ENCODE measurements at regions of chr11 and their contacts with region 1.

Region 1: DNA sequence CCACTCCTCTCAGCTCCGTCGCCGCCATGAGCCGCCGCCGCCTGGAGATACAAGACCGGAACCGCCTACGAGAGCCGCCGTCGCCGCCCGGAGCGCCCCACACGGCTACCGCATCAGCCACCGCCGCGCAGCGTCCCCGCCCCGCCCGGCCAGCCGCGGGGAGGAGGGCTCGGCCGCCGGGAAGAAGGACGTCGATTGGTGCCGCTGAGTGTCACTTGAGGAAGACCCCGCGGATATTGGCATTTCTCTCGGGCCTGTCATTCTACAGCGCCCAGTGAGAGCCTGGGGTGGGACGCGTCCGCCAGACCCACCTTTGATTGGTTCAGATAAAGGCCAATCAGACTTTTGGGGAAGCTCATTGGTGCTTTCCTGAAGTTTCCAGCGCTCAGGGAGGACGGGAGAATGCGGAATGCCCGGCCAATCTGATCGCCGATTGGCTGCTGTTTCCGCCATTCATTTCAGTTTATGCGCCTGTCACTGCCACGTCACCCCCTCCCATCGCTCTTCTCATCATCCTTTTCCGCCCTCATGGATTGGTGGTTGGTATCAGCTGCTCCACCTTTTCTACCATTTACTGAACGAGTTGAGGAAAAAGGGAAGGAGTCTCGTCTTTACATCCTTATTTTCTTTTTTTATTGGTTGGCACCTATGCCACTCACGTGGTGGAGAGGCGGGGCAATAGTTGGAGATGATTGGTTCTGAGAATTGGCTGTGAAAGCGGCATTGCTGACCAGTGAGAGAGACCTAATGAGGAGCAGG is at the start of gene OSBP:
- DNase-seq: peak; percentile 97 to 100 (median 100)
- ATAC-seq: peak; percentile 93 to 96 (median 94)
- H3K4me3 ChIP-seq: peak within 1 kb of the TSS; percentile 82 to 92 (median 86)
- H3K27ac ChIP-seq: peak within 1 kb of the TSS; percentile 87 to 95 (median 92)
- H3K4me1 ChIP-seq: peaks cover 0 to 46% (median 39%) of the 10 kb centered on the region in 12 donors
- H3K27me3 ChIP-seq: no peaks in the 10 kb centered on the region
- CTCF ChIP-seq: peak in 3 of 12 donors; percentile 2 to 20 (median 5)
- POLR2A ChIP-seq: peak in 1 of 2 donors; percentile 80
- total RNA-seq, gene OSBP: 23.4 to 48.3 (median 33.1) TPM

Region 2: DNA sequence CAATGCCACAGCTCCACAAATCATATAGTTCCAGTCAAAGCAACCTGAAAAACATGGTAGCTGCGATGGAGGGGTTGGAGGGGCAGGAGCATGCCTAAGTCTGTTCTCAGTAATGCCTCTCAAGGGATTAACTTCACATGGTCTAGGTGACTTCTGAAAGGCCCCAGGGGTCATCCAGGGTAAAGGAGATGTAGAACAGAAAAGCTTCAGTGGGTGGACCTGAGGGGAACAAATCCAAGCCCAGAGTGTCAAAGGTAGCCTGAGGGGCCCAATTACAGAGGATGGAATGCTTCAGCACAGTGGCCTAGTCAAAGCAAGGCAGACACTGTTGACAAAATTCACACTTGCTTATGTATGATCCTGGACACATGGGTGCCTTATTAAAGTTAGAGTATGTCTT is 81.1 kb before region 1 on chr11:
- intact Hi-C with region 1: loop called in 1 of 10 experiments (anchors 5 kb)
- DNase-seq: no peak
- ATAC-seq: no peak
- H3K4me3 ChIP-seq: no peak overlapping the region
- H3K27ac ChIP-seq: no peak overlapping the region
- H3K4me1 ChIP-seq: peaks cover 0 to 10% (median 0%) of the 10 kb centered on the region in 12 donors
- H3K27me3 ChIP-seq: no peaks in the 10 kb centered on the region
- CTCF ChIP-seq: no peak
- POLR2A ChIP-seq: no peak

Region 3: GRCh38 chr11:59545179-59546020 is 70.4 kb before region 1 on chr11:
- intact Hi-C with region 1: loop called in 5 of 10 experiments (anchors 5 to 10 kb)
- DNase-seq: no peak
- ATAC-seq: no peak
- H3K4me3 ChIP-seq: no peak overlapping the region
- H3K27ac ChIP-seq: no peak overlapping the region
- H3K4me1 ChIP-seq: peaks cover 0 to 25% (median 0%) of the 10 kb centered on the region in 12 donors
- H3K27me3 ChIP-seq: no peaks in the 10 kb centered on the region
- CTCF ChIP-seq: no peak
- POLR2A ChIP-seq: no peak

Region 4: DNA sequence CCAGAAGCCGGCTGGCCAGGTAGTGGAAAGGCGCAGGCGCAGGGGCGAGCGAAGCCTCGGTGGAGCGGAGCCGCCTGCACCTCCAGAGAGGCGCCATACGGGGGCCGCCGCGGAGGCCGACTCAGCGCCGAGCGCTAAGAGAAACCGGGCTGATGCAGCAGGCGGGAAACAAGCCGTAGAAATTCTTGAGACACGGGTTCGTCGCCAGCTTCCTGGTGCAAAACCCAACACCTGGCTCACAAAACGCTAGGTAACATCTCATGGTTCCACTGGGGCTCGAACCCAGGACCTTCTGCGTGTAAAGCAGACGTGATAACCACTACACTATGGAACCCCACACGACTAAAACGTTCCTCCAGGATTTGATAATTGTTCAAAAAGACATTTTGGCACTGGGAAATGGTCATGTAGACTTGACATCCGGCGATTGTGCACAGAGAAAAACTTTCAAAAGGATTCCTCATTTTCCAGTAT is 65.4 kb before region 1 on chr11:
- intact Hi-C with region 1: loop called in 5 of 10 experiments (anchors 5 to 10 kb)
- DNase-seq: peak; percentile 62 to 83 (median 78)
- ATAC-seq: peak; percentile 74 to 91 (median 86)
- H3K4me3 ChIP-seq: peak overlapping the region; percentile 24 to 68 (median 56)
- H3K27ac ChIP-seq: peak overlapping the region; percentile 43 to 89 (median 80)
- H3K4me1 ChIP-seq: peaks cover 0 to 44% (median 0%) of the 10 kb centered on the region in 12 donors
- H3K27me3 ChIP-seq: peaks cover 0 to 2% (median 0%) of the 10 kb centered on the region in 9 donors
- CTCF ChIP-seq: peak; percentile 19 to 62 (median 40)
- POLR2A ChIP-seq: no peak

Region 5: GRCh38 chr11:59560702-59561469 is 54.9 kb before region 1 on chr11:
- intact Hi-C with region 1: loop called in 4 of 10 experiments (anchors 2 to 10 kb)
- DNase-seq: peak; percentile 88 to 91 (median 90)
- ATAC-seq: peak; percentile 83 to 92 (median 88)
- H3K4me3 ChIP-seq: peak overlapping the region; percentile 70 to 96 (median 84)
- H3K27ac ChIP-seq: peak overlapping the region; percentile 59 to 92 (median 82)
- H3K4me1 ChIP-seq: peaks cover 0 to 37% (median 7%) of the 10 kb centered on the region in 12 donors
- H3K27me3 ChIP-seq: no peaks in the 10 kb centered on the region
- CTCF ChIP-seq: no peak
- POLR2A ChIP-seq: peak in 1 of 2 donors; percentile 24

Region 6: DNA sequence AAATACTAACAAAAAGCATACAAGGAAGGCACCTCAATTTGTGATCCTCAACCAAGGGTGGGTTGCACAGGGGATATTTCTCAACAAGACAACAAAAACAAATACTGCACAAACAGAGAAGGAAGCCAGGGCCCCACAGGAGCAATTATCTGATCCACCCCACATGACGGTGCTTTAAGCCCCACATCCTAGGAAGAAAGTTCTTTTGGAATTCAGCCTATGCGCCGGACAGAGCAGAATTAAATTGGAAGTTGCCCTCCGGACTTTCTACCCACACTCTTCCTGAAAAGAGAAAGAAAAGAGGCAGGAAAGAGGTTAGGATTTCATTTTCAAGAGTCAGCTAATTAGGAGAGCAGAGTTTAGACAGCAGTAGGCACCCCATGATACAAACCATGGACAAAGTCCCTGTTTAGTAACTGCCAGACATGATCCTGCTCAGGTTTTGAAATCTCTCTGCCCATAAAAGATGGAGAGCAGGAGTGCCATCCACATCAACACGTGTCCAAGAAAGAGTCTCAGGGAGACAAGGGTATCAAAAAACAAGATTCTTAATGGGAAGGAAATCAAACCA is 40.8 kb before region 1 on chr11:
- intact Hi-C with region 1: loop called in 1 of 10 experiments (anchors 5 kb)
- DNase-seq: no peak
- ATAC-seq: no peak
- H3K4me3 ChIP-seq: no peak overlapping the region
- H3K27ac ChIP-seq: peak overlapping the region in 8 of 12 donors; percentile 11 to 75 (median 48)
- H3K4me1 ChIP-seq: peaks cover 0 to 21% (median 1%) of the 10 kb centered on the region in 12 donors
- H3K27me3 ChIP-seq: no peaks in the 10 kb centered on the region
- CTCF ChIP-seq: no peak
- POLR2A ChIP-seq: no peak

Region 7: DNA sequence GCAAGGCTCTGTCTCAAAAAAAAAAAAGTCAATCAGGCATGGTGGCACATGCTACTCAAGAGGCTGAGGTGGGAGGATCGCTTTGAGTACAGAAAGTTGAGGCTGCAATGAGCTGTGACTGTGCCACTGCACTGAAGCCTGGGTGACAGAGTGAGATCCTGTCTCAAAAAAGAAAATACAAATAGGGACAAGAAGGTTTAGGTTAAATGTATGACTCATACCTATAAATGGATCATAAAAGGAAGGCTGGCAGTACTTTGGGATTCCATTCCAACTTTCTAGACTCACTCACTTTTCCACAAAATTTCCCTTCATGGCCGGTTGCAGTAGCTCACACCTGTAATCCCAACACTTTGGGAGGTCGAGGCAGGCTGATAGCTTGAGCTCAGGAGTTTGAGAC is 25.3 kb after region 1 on chr11:
- intact Hi-C with region 1: no loop called
- DNase-seq: no peak
- ATAC-seq: no peak
- H3K4me3 ChIP-seq: no peak overlapping the region
- H3K27ac ChIP-seq: no peak overlapping the region
- H3K4me1 ChIP-seq: no peaks in the 10 kb centered on the region
- H3K27me3 ChIP-seq: no peaks in the 10 kb centered on the region
- CTCF ChIP-seq: no peak
- POLR2A ChIP-seq: no peak

Region 8: GRCh38 chr11:59957094-59957493 is 341.3 kb after region 1 on chr11:
- intact Hi-C with region 1: no loop called
- DNase-seq: no peak
- ATAC-seq: no peak
- H3K4me3 ChIP-seq: no peak overlapping the region
- H3K27ac ChIP-seq: no peak overlapping the region
- H3K4me1 ChIP-seq: peaks cover 0 to 2% (median 0%) of the 10 kb centered on the region in 12 donors
- H3K27me3 ChIP-seq: no peaks in the 10 kb centered on the region
- CTCF ChIP-seq: no peak
- POLR2A ChIP-seq: no peak

Region 9: GRCh38 chr11:60005360-60005759 is 389.5 kb after region 1 on chr11:
- intact Hi-C with region 1: no loop called
- DNase-seq: no peak
- ATAC-seq: no peak
- H3K4me3 ChIP-seq: no peak overlapping the region
- H3K27ac ChIP-seq: no peak overlapping the region
- H3K4me1 ChIP-seq: no peaks in the 10 kb centered on the region
- H3K27me3 ChIP-seq: no peaks in the 10 kb centered on the region
- CTCF ChIP-seq: no peak
- POLR2A ChIP-seq: no peak